Endothelial cell of umbilical vein (primary cell): ENCODE measurements at regions of chr2 and their contacts with region 1.

Region 1: DNA sequence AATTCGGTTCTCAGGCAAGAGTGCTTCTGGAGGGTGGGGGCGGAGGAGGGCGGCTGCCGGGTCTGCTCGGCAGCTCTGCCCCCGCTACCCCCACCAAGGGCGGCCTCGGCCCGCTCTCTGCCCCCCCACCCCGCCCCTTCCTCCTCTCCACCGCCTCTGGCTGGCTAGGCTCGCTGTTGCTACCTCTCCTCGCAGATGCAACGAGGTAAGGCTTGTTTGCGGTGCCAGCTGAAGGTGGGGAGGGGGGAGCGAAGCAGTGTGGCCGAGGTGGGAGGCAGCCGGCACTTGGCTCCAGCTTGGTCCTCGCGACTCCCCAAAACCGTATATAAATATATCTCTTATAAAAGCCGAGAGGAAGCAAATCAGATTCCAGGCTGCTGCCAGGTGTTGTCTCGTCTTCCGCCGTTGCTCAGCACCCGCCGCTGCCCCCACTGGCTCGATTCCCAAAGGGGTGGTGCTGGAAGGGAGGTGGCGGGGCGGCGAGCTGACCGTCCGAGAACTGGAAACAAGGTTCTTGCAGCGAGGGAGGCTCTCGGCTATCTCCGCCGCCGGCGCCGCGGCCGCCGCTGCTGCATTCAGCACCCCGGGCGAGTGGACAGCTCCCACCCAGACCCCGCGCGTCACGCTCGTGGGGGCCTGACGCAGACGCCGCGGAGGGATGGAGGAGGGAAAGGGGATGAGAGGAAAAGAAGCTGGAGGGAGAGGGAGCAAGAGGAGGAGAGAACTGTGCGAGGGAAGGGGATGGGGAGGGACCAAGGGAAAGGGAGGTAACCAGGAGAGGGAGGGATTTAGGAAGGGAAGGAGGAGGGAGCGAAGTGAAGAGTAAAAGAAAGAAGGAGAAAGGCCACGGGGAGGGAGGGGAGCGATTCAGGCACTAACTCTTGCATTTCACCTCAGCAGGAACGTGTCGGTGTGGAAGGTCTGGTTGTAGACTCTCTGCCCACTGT is at the start of gene MARCHF4:
- DNase-seq: peak; percentile 92
- H3K4me3 ChIP-seq: peak within 1 kb of the TSS; percentile 66 to 80 (median 69)
- H3K27ac ChIP-seq: peak within 1 kb of the TSS; percentile 99
- H3K4me1 ChIP-seq: peaks cover 57% of the 10 kb centered on the region
- H3K27me3 ChIP-seq: no peaks in the 10 kb centered on the region
- CTCF ChIP-seq: no peak
- POLR2A ChIP-seq: no peak
- total RNA-seq, gene MARCHF4: 21.5 and 25.2 TPM in 2 replicates

Region 2: DNA sequence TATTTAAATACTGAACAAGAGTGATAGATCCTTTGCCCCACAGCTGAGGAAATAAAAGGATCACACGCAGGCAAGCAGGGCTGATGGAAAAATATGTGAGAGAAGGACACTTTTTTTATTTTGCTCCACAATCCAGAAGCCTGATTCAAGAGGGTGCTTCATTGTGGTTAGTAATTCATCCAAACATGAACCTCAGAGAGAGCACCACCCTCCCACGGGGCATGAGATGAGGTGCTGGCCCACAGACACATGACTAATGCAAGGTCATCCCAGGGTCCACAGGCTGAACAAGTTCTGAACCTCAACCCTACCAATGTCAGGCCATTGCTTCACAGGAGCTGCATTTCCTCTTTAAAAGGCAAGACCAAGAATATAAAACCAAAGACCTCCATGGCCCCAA is 598.3 kb before region 1 on chr2:
- CTCF ChIA-PET with region 1: no interaction called
- POLR2A ChIA-PET with region 1: no interaction called
- dilution Hi-C with region 1: no loop called
- intact Hi-C with region 1: no loop called
- DNase-seq: no peak
- H3K4me3 ChIP-seq: no peak overlapping the region
- H3K27ac ChIP-seq: no peak overlapping the region
- H3K4me1 ChIP-seq: peaks cover 32% of the 10 kb centered on the region
- H3K27me3 ChIP-seq: no peaks in the 10 kb centered on the region
- CTCF ChIP-seq: no peak
- POLR2A ChIP-seq: no peak

Region 3: DNA sequence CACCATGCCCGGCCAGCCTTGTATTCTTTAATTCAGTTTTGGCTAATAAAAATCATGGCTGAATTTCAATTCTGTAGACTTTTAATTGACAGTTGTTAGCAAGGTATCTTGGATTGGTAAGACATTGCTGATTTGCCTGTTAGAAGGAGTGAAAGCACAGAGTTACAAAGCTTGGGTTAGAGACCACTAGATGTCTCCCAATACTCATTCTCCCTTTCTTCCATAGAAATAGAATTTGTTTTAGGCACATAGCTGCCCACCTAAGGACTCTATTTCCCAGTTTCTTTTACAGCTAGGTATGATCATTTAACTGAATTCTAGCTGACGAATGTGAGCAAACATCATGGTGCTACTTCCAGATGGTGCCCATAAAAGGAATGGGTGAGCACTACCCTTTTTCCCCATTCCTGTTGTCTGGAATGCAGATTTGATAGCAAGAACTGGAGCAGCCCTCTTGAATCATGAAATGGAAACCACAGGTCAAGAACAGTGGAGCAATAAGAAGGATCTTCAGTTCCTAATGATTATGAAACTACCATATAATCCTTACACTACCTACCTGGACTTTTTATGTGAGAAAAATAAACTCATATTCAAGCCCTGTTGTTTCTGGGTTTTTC is 307.9 kb before region 1 on chr2:
- CTCF ChIA-PET with region 1: no interaction called
- POLR2A ChIA-PET with region 1: no interaction called
- dilution Hi-C with region 1: no loop called
- intact Hi-C with region 1: no loop called
- DNase-seq: no peak
- H3K4me3 ChIP-seq: no peak overlapping the region
- H3K27ac ChIP-seq: no peak overlapping the region
- H3K4me1 ChIP-seq: no peaks in the 10 kb centered on the region
- H3K27me3 ChIP-seq: no peaks in the 10 kb centered on the region
- CTCF ChIP-seq: no peak
- POLR2A ChIP-seq: no peak

Region 4: GRCh38 chr2:216298723-216299495 is 73.1 kb before region 1 on chr2:
- CTCF ChIA-PET with region 1: no interaction called
- POLR2A ChIA-PET with region 1: no interaction called
- dilution Hi-C with region 1: no loop called
- intact Hi-C with region 1: loop called (anchors 2 kb)
- DNase-seq: peak; percentile 59
- H3K4me3 ChIP-seq: no peak overlapping the region
- H3K27ac ChIP-seq: peak overlapping the region; percentile 63
- H3K4me1 ChIP-seq: peaks cover 12% of the 10 kb centered on the region
- H3K27me3 ChIP-seq: no peaks in the 10 kb centered on the region
- CTCF ChIP-seq: no peak
- POLR2A ChIP-seq: no peak

Region 5: DNA sequence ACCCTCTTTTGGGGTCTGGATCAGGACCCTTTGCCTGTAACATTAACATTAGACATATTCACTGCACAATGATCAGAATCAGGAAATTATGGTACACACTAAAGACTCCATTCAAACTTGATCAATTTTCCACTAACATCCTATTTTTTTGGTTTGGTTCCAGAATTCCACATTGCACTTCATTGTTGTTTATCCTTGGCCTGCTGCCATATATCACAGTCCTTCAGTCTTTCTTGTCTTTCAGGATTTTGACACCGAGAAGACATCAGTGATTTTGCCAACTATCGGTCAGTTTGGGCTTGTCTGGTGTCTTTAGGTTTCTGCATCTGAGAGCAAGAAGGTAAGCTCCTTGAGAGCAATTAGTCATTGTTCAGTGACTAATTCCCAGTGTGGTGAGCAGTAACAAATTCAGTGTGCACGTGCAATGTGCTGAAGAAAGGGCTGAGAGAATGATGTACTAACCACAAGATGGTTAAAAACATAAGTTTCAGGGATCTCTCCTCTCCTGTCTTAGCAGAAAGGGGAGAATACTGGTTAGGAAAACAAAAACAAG is 23.2 kb before region 1 on chr2:
- CTCF ChIA-PET with region 1: interaction called, 5 read pairs
- POLR2A ChIA-PET with region 1: no interaction called
- dilution Hi-C with region 1: no loop called
- intact Hi-C with region 1: loop called (anchors 1 kb)
- DNase-seq: peak; percentile 54
- H3K4me3 ChIP-seq: no peak overlapping the region
- H3K27ac ChIP-seq: no peak overlapping the region
- H3K4me1 ChIP-seq: peaks cover 13% of the 10 kb centered on the region
- H3K27me3 ChIP-seq: no peaks in the 10 kb centered on the region
- CTCF ChIP-seq: no peak
- POLR2A ChIP-seq: no peak

Region 6: DNA sequence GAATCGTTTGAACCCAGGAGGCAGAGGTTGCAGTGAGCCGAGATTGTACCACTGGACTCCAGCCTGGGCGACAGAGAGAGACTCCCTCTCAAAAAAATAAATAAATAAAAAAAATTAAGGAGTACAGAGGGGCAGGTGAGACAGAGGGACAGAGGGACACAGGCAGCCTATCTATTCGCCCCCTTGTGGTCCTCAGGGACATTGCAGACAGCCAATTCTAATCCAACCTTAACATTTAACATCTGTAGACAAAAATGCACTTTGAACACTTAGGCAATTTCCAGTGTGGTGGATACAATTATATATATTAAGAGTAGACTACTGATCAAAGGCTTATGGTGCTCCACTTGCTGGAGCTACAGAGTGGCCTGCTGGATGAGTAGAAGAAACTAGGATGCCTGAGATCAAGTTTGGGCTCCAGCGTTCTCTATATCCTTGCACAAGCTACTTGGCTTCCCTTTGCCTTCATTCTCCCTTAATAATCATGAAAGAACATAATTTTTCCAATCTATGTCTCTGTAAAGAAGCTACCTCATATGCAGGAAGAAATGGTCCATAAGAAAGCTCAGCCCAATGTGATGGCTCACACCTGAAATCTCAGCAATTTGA is 32.1 kb after region 1 on chr2:
- CTCF ChIA-PET with region 1: interaction called, 52 read pairs
- POLR2A ChIA-PET with region 1: interaction called, 3 read pairs
- dilution Hi-C with region 1: no loop called
- intact Hi-C with region 1: loop called (anchors 1 kb)
- DNase-seq: peak; percentile 21
- H3K4me3 ChIP-seq: no peak overlapping the region
- H3K27ac ChIP-seq: no peak overlapping the region
- H3K4me1 ChIP-seq: no peaks in the 10 kb centered on the region
- H3K27me3 ChIP-seq: no peaks in the 10 kb centered on the region
- CTCF ChIP-seq: peak; percentile 72 to 75
- POLR2A ChIP-seq: no peak

Region 7: GRCh38 chr2:216498418-216499413 is 126.7 kb after region 1 on chr2 and contains the start of gene RPL37A:
- CTCF ChIA-PET with region 1: no interaction called
- POLR2A ChIA-PET with region 1: interaction called, 6 read pairs
- dilution Hi-C with region 1: no loop called
- intact Hi-C with region 1: loop called (anchors 1 kb)
- DNase-seq: peak; percentile 96
- H3K4me3 ChIP-seq: peak within 1 kb of the TSS; percentile 85 to 99 (median 99)
- H3K27ac ChIP-seq: peak within 1 kb of the TSS; percentile 81
- H3K4me1 ChIP-seq: peaks cover 42% of the 10 kb centered on the region
- H3K27me3 ChIP-seq: no peaks in the 10 kb centered on the region
- CTCF ChIP-seq: no peak
- POLR2A ChIP-seq: peak; percentile 99
- total RNA-seq, gene RPL37A: 2,628 and 2,952 TPM in 2 replicates

Region 8: GRCh38 chr2:216555274-216555673 is 183.2 kb after region 1 on chr2:
- CTCF ChIA-PET with region 1: no interaction called
- POLR2A ChIA-PET with region 1: no interaction called
- dilution Hi-C with region 1: no loop called
- intact Hi-C with region 1: no loop called
- DNase-seq: peak; percentile 42
- H3K4me3 ChIP-seq: no peak overlapping the region
- H3K27ac ChIP-seq: no peak overlapping the region
- H3K4me1 ChIP-seq: peaks cover 6% of the 10 kb centered on the region
- H3K27me3 ChIP-seq: no peaks in the 10 kb centered on the region
- CTCF ChIP-seq: no peak
- POLR2A ChIP-seq: no peak

Region 9: GRCh38 chr2:216590780-216591179 is 218.8 kb after region 1 on chr2:
- CTCF ChIA-PET with region 1: no interaction called
- POLR2A ChIA-PET with region 1: no interaction called
- dilution Hi-C with region 1: no loop called
- intact Hi-C with region 1: no loop called
- DNase-seq: no peak
- H3K4me3 ChIP-seq: no peak overlapping the region
- H3K27ac ChIP-seq: no peak overlapping the region
- H3K4me1 ChIP-seq: no peaks in the 10 kb centered on the region
- H3K27me3 ChIP-seq: peaks cover 0 to 1% of the 10 kb centered on the region in 2 experiments
- CTCF ChIP-seq: no peak
- POLR2A ChIP-seq: no peak